Caco-2 (cell line): ENCODE measurements at regions of chr7 and their contacts with region 1.

Region 1: GRCh38 chr7:25851332-25852210 is 300.4 kb upstream of the NFE2L3 start:
- DNase-seq: peak; percentile 85 to 89
- H3K4me3 ChIP-seq: peak overlapping the region; percentile 29
- H3K4me3 Mint-ChIP-seq: peak overlapping the region; percentile 76
- H3K27ac Mint-ChIP-seq: peak overlapping the region; percentile 50
- H3K4me1 ChIP-seq: peaks cover 27% of the 10 kb centered on the region
- H3K4me1 Mint-ChIP-seq: peaks cover 31% of the 10 kb centered on the region
- H3K27me3 ChIP-seq: no peaks in the 10 kb centered on the region
- H3K27me3 Mint-ChIP-seq: peaks cover 6% of the 10 kb centered on the region
- CTCF ChIP-seq: peak; percentile 82 to 83

Region 2: GRCh38 chr7:25125137-25125946 is 726.2 kb before region 1 on chr7 and contains the start of gene CYCS:
- CTCF ChIA-PET with region 1: no interaction called
- POLR2A ChIA-PET with region 1: no interaction called
- intact Hi-C with region 1: loop called (anchors 10 kb)
- DNase-seq: peak; percentile 99 to 100
- H3K4me3 ChIP-seq: peak within 1 kb of the TSS; percentile 77
- H3K4me3 Mint-ChIP-seq: peak within 1 kb of the TSS; percentile 88
- H3K27ac Mint-ChIP-seq: peak within 1 kb of the TSS; percentile 96
- H3K4me1 ChIP-seq: peaks cover 16% of the 10 kb centered on the region; the same call in 1 of the 2 replicates
- H3K4me1 Mint-ChIP-seq: peaks cover 19% of the 10 kb centered on the region
- H3K27me3 ChIP-seq: no peaks in the 10 kb centered on the region
- H3K27me3 Mint-ChIP-seq: no peaks in the 10 kb centered on the region
- CTCF ChIP-seq: peak in 1 of 2 experiments; percentile 2
- total RNA-seq, gene CYCS: 156 and 177 TPM in 2 replicates

Region 3: DNA sequence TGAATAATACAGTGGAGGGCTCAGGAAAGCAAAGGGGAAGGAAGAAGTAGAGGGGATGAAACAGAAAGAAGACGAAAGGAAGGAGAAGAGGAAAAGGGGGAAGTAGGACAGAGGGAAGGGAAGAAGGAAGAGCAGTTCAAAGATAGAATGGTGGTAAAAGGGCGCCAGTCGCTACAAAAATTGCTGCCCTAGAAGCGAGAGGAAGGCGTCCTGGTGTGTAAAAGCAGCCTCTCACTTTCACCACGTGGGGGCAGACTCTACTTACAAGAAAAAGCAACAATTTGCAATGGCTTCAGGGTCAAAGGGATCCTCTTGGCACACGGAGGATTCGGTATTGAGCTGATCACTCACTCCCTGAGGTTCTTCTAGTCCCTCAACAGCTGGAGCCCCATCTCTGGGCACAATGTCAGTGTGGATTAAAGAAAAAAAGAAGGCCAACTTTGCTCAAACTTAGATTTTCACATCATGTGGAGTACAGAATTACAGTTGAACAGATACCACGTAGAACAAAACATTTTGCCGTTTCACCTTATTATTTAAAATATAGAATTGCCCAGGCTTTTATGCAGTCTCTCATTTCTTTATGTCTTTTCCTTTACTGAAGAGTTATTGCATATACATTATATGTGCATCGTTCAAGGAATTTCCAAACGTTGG is 591.9 kb before region 1 on chr7:
- CTCF ChIA-PET with region 1: interaction called, 3 read pairs
- POLR2A ChIA-PET with region 1: no interaction called
- intact Hi-C with region 1: loop called (anchors 1 kb)
- DNase-seq: peak; percentile 69 to 72
- H3K4me3 ChIP-seq: no peak overlapping the region
- H3K4me3 Mint-ChIP-seq: no peak overlapping the region
- H3K27ac Mint-ChIP-seq: no peak overlapping the region
- H3K4me1 ChIP-seq: no peaks in the 10 kb centered on the region
- H3K4me1 Mint-ChIP-seq: no peaks in the 10 kb centered on the region
- H3K27me3 ChIP-seq: no peaks in the 10 kb centered on the region; the same call in 1 of the 2 replicates
- H3K27me3 Mint-ChIP-seq: peaks cover 19% of the 10 kb centered on the region
- CTCF ChIP-seq: peak; percentile 81 to 85

Region 4: GRCh38 chr7:25565949-25566348 is 285.6 kb before region 1 on chr7:
- CTCF ChIA-PET with region 1: interaction called, 8 read pairs
- POLR2A ChIA-PET with region 1: no interaction called
- intact Hi-C with region 1: loop called (anchors 1 kb)
- DNase-seq: peak in 1 of 2 experiments; percentile 59
- H3K4me3 ChIP-seq: no peak overlapping the region
- H3K4me3 Mint-ChIP-seq: no peak overlapping the region
- H3K27ac Mint-ChIP-seq: no peak overlapping the region
- H3K4me1 ChIP-seq: no peaks in the 10 kb centered on the region
- H3K4me1 Mint-ChIP-seq: peaks cover 6% of the 10 kb centered on the region
- H3K27me3 ChIP-seq: no peaks in the 10 kb centered on the region
- H3K27me3 Mint-ChIP-seq: peaks cover 13% of the 10 kb centered on the region
- CTCF ChIP-seq: peak; percentile 100

Region 5: GRCh38 chr7:25669961-25670841 is 181.4 kb before region 1 on chr7:
- CTCF ChIA-PET with region 1: no interaction called
- POLR2A ChIA-PET with region 1: no interaction called
- intact Hi-C with region 1: loop called (anchors 10 kb)
- DNase-seq: no peak
- H3K4me3 ChIP-seq: no peak overlapping the region
- H3K4me3 Mint-ChIP-seq: no peak overlapping the region
- H3K27ac Mint-ChIP-seq: no peak overlapping the region
- H3K4me1 ChIP-seq: no peaks in the 10 kb centered on the region
- H3K4me1 Mint-ChIP-seq: no peaks in the 10 kb centered on the region
- H3K27me3 ChIP-seq: peaks cover 1% of the 10 kb centered on the region; the same call in 1 of the 2 replicates
- H3K27me3 Mint-ChIP-seq: peaks cover 31% of the 10 kb centered on the region
- CTCF ChIP-seq: no peak

Region 6: DNA sequence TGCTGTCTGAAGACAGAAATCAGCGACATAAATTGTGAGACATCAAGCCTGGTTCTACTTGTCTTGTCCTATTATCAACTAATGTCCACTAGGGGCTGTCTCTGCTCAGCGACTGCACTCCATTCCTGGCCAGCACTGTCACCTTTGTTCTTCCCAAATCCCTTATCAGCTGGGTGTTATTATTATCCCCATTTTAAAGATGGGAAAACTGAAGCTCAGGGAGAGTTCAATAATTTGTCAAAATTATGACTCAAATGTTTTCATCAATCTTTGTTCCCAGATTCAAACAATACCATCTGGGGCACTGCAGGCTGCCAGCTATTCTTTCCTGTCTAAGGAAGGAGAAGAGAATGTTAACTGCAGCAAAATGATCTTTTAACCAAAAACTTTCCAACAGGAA is 131.1 kb before region 1 on chr7:
- CTCF ChIA-PET with region 1: no interaction called
- POLR2A ChIA-PET with region 1: no interaction called
- intact Hi-C with region 1: loop called (anchors 1 kb)
- DNase-seq: peak in 1 of 2 experiments; percentile 15
- H3K4me3 ChIP-seq: no peak overlapping the region
- H3K4me3 Mint-ChIP-seq: no peak overlapping the region
- H3K27ac Mint-ChIP-seq: no peak overlapping the region
- H3K4me1 ChIP-seq: no peaks in the 10 kb centered on the region
- H3K4me1 Mint-ChIP-seq: no peaks in the 10 kb centered on the region
- H3K27me3 ChIP-seq: no peaks in the 10 kb centered on the region; the same call in 1 of the 2 replicates
- H3K27me3 Mint-ChIP-seq: peaks cover 11% of the 10 kb centered on the region
- CTCF ChIP-seq: peak; percentile 49 to 50

Region 7: GRCh38 chr7:25862260-25863037 is 10.9 kb after region 1 on chr7:
- CTCF ChIA-PET with region 1: interaction called, 13 read pairs
- POLR2A ChIA-PET with region 1: no interaction called
- intact Hi-C with region 1: no loop called
- DNase-seq: peak; percentile 99 to 100
- H3K4me3 ChIP-seq: no peak overlapping the region
- H3K4me3 Mint-ChIP-seq: peak overlapping the region; percentile 71
- H3K27ac Mint-ChIP-seq: peak overlapping the region; percentile 19
- H3K4me1 ChIP-seq: no peaks in the 10 kb centered on the region
- H3K4me1 Mint-ChIP-seq: no peaks in the 10 kb centered on the region
- H3K27me3 ChIP-seq: no peaks in the 10 kb centered on the region
- H3K27me3 Mint-ChIP-seq: peaks cover 19% of the 10 kb centered on the region
- CTCF ChIP-seq: no peak